ENCODE measurements at regions of chr10 and their contacts with region 1.

Region 1: DNA sequence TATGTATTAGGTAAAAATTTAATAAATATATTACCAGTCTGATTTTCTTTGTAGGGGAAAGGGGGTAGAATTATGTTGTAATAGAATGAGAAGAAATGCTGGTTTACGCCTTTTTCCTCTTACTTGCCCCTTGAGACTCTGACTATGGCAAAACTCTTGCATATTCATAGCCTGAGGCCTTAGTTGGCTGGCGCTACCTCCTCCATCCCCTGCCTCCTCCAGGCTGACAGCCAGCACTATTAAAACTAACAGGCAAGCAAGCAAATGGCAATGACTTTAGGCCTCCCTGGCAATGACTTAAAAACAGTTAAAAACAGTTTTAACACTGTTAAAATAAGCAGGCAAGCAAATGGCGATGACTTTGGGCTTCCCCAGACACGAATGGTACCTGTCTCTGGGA is 14.4 kb downstream of the PKD2L1 start:
- DNase-seq: no peak
- H3K4me3 ChIP-seq: no peak overlapping the region
- H3K27ac ChIP-seq: no peak overlapping the region
- H3K4me1 ChIP-seq: no peaks in the 10 kb centered on the region
- H3K27me3 ChIP-seq: peaks cover 10 to 28% of the 10 kb centered on the region in 2 experiments
- CTCF ChIP-seq: no peak
- POLR2A ChIP-seq: no peak

Region 2: DNA sequence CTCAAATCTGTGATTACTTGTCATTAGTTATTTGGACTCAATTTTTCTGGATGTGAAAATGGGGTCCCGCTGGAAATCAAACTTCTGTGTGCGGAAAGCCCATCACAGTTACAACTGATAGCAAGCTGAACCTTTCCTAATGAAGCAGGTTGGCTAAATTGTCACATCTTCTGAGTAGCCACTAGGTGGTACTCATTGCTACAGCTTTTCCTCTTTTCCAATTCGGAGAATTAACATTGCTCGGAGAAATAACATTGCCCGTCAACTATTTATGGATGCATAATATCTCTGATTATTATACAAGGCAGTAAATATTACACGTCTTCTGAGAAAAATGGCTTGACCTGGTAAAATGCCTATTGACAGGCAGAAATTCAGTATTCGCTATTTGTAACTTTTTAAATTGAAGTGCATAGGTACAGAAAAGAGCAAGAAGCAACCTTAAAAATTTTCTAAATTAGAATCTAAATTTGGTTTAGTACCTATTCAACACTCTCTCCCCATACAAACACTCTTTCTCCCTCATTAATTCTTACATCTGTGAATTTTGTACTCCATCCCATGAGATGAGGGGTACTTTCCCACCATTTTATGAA is 11.8 kb before region 1 on chr10:
- CTCF ChIA-PET with region 1: interaction called, 14 read pairs
- POLR2A ChIA-PET with region 1: interaction called, 5 read pairs
- dilution Hi-C with region 1: no loop called
- intact Hi-C with region 1: no loop called
- DNase-seq: peak; percentile 22
- H3K4me3 ChIP-seq: no peak overlapping the region
- H3K27ac ChIP-seq: no peak overlapping the region
- H3K4me1 ChIP-seq: no peaks in the 10 kb centered on the region
- H3K27me3 ChIP-seq: peaks cover 11 to 18% of the 10 kb centered on the region in 2 experiments
- CTCF ChIP-seq: peak; percentile 52
- POLR2A ChIP-seq: no peak